Dorsolateral prefrontal cortex (tissue), 120 donors: ENCODE measurements at regions of chr4 and their contacts with region 1.

Region 1: DNA sequence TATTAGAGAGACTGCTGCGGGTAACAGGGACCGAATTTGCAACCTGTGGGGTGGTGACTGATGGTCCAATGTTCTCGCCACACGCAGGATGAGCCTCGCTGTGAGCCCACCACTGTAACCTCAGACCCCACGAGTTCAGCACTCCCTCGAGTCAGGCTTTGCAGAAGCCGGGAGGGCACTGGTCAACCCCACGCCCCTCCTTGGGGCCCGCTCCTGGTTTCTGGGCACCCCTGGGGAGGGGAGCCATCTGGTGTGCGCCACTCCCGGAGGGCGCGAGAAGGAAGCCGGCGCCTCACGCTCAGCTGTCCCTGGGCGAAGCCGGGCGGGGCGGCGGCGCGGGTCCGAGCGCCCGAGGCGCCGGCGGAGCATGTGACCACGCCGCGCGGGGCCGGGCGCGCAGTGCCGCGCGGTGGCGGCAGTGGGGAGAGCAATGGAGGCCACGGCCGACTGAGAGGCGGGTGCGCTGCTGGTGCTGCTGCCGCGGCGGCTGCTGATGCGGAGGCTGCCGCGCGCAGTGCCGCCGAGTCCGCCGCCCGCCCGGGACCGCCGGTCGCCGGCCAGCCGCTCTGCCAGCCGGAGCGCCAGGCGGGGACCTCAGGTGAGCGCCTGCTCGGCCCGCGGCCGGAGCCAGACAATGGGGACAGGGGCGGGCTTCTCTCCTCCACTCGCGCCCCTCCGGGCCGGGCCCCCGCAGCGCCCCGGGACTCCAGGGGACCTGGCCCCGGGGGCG is 100.1 kb downstream of the CEP135 start:
- DNase-seq: peak in 9 of 10 donors; percentile 25 to 81 (median 53)
- H3K4me3 ChIP-seq: peak overlapping the region; percentile 58 to 87 (median 74)
- H3K27ac ChIP-seq: peak overlapping the region in 34 of 59 donors; percentile 4 to 79 (median 54)
- H3K27me3 ChIP-seq: peaks cover 0 to 3% (median 0%) of the 10 kb centered on the region in 45 donors
- CTCF ChIP-seq: peak in 33 of 56 donors; percentile 8 to 75 (median 41)

Region 2: DNA sequence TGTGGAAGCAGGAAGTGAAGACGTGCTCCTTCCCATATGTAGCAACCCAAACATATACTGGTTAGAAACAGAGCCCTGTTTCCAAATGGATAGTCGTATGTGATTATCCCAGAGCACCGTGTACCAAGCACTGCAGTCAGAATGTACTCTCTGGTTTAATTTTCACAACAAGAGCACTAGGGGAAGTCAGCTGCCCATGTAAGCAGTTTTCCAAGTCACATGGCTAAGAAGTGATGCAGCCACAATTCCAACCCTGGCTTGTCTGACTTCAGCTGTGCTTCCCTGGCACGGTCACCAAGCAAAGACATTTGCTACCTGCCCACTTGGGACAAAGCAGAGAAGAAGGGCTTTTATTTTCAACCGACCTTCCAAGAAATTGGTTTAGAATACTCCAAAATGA is 128.3 kb before region 1 on chr4:
- intact Hi-C with region 1: no loop called
- DNase-seq: no peak
- H3K4me3 ChIP-seq: no peak overlapping the region
- H3K27ac ChIP-seq: no peak overlapping the region
- H3K27me3 ChIP-seq: no peaks in the 10 kb centered on the region
- CTCF ChIP-seq: no peak

Region 3: GRCh38 chr4:56301181-56302076 is 252.6 kb after region 1 on chr4:
- intact Hi-C with region 1: loop called (anchors 5 kb)
- DNase-seq: peak; percentile 56 to 88 (median 76)
- H3K4me3 ChIP-seq: peak overlapping the region in 38 of 59 donors; percentile 1 to 54 (median 28)
- H3K27ac ChIP-seq: peak overlapping the region in 4 of 59 donors; percentile 17 to 20 (median 19)
- H3K27me3 ChIP-seq: no peaks in the 10 kb centered on the region
- CTCF ChIP-seq: peak; percentile 44 to 90 (median 79)